ENCODE measurements at regions of chr19 and their contacts with region 1.

Region 1: DNA sequence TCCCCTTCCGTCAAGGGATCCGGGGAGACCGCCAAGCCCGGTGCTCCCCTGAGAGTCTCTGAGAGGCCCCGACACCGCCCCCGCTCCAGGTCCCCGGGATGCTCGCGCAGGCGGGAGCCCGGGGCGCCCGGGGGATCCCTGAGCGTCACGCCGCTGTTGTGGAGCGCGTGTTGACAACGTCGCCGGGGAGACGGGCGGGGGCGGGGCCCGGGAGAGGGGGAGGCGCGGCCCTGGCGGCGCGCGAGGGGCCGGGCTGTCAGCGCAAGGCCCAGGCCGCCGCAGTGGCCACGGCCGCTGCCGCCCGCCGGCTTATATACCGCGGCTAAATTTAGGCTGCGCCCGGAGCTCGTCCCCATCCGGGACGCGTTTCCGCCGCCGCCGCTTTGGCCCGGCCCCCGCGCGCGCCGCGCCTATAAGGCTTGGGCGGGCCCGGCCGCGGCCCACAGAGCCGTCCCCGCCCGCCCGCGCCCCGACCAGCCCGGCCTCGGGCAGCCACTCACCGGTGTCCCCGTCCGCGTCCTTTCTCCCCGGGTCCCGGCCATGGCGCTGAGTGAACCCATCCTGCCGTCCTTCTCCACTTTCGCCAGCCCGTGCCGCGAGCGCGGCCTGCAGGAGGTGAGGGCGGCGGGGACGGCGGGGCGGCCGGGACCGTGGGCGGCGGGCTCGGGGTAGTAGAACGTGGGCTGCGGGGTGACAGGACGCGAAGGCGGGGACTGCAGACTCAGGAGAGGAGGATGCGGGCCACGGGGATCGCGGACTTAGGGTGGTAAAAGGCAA is at the start of gene KLF2:
- DNase-seq: peak; percentile 28
- ATAC-seq: peak; percentile 83
- H3K4me3 ChIP-seq: peak within 1 kb of the TSS; percentile 49 to 63 (median 50); a peak in 4 of 6 replicates
- H3K27ac ChIP-seq: no peak within 1 kb of the TSS
- H3K4me1 ChIP-seq: peaks cover 22% of the 10 kb centered on the region
- H3K27me3 ChIP-seq: peaks cover 2 to 15% of the 10 kb centered on the region in 2 experiments; a peak in 3 of 5 replicates
- CTCF ChIP-seq: no peak
- EP300 ChIP-seq: no peak
- POLR2A ChIP-seq: no peak
- RAD21 ChIP-seq: no peak
- total RNA-seq, gene KLF2: not detected in 2 replicates

Region 2: DNA sequence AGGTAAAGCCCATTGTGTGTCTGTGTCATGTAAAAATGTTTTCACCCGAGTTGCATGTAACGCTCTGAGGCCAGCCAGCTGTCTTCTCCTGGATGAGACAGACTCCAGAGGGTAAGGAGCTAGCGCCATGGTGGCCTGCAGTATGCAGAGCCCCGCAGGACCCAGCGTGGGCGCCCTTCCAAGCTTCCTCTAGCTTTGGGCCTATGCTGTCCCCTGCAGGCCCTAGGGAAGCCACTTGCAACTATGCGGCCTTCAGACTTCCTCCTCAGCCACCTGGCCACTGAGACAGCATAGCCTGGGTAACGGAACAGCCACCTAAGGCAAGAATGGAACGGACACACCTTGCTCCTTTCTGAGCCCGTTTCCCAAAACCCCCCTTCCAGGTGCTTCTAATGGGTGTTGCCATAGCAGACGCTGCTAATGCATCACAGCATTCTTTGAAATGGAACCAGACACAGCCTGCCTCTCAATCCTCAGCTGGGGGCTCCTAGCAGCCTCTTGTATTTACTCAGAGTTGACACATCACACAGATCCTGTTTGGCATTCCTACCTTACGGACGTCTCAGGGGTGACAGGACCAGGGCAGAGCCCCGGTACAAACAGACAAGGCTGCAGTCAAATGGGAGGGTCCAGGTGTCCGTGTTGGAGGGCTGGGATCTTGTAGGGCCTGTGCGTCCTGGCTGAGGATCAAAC is 133.2 kb before region 1 on chr19:
- CTCF ChIA-PET with region 1: no interaction called
- POLR2A ChIA-PET with region 1: no interaction called
- in situ Hi-C with region 1: no loop called
- intact Hi-C with region 1: no loop called
- DNase-seq: no peak
- ATAC-seq: peak; percentile 48
- H3K4me3 ChIP-seq: no peak overlapping the region
- H3K27ac ChIP-seq: no peak overlapping the region
- H3K4me1 ChIP-seq: peaks cover 16% of the 10 kb centered on the region
- H3K27me3 ChIP-seq: no peaks in the 10 kb centered on the region
- CTCF ChIP-seq: no peak
- EP300 ChIP-seq: no peak
- POLR2A ChIP-seq: no peak
- RAD21 ChIP-seq: no peak

Region 3: GRCh38 chr19:16247353-16248182 is 77.0 kb before region 1 on chr19:
- CTCF ChIA-PET with region 1: interaction called, 9 read pairs
- POLR2A ChIA-PET with region 1: no interaction called
- in situ Hi-C with region 1: no loop called
- intact Hi-C with region 1: loop called (anchors 10 kb)
- DNase-seq: peak; percentile 51
- ATAC-seq: peak; percentile 99
- H3K4me3 ChIP-seq: no peak overlapping the region
- H3K27ac ChIP-seq: no peak overlapping the region
- H3K4me1 ChIP-seq: no peaks in the 10 kb centered on the region
- H3K27me3 ChIP-seq: no peaks in the 10 kb centered on the region
- CTCF ChIP-seq: peak; percentile 98
- EP300 ChIP-seq: no peak
- POLR2A ChIP-seq: no peak
- RAD21 ChIP-seq: peak; percentile 94

Measured in HepG2 (cell line).